CD4-positive, alpha-beta memory T cell (primary cell): ENCODE measurements at regions of chr4 and their contacts with region 1.

Region 1: DNA sequence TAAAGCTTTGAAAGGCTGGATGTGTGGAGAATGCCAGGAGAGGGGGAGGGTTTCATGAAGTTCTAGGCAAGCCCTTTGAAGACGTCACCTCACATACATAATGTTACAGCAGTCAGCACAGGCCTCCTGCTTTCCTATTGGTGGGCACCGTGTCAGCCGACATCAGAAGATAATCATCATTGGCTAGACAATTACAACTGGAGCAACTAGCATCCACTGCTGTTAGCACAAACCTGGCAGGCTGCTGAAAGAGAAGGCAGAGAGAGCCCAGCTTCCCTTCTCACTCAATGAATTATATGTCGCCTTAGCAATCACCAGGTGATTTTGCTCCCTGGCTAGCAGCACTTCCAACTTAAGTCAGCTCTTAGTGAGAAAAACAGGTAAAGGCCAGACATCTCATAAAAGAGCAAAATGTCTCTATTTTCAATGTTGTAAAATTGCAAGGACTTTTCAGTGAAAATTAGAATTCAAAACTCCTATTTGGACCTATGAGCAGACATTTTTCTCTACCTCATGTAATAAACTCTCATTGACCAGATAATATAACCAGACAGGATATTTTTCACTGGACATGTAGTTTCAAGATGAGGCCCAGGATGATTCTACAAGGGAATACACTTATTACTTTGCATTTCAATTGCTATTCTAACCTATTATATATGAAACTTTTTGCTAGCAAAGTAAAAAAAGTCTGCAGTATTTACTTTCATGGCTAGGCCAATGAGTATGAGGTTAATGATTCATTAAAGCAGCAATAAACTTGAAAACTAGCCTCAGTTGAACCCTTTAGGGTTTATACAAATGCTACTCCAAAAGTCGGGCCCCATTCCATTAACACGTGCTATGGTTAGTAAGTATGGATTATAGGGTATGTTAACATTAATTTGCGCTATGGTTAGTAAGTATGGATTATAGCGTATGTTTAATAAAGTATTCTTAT is 4.3 kb downstream of the ELOVL6 start:
- DNase-seq: peak; percentile 71 to 87 (median 78)
- H3K4me3 ChIP-seq: no peak overlapping the region
- H3K4me3 Mint-ChIP-seq: peak overlapping the region in 6 of 8 donors; percentile 12 to 40 (median 31)
- H3K27ac ChIP-seq: peak overlapping the region; percentile 21
- H3K27ac Mint-ChIP-seq: peak overlapping the region; percentile 54 to 91 (median 84)
- H3K4me1 ChIP-seq: peaks cover 27% of the 10 kb centered on the region
- H3K4me1 Mint-ChIP-seq: peaks cover 17 to 43% (median 27%) of the 10 kb centered on the region in 4 donors
- H3K27me3 ChIP-seq: no peaks in the 10 kb centered on the region
- H3K27me3 Mint-ChIP-seq: no peaks in the 10 kb centered on the region

Region 2: DNA sequence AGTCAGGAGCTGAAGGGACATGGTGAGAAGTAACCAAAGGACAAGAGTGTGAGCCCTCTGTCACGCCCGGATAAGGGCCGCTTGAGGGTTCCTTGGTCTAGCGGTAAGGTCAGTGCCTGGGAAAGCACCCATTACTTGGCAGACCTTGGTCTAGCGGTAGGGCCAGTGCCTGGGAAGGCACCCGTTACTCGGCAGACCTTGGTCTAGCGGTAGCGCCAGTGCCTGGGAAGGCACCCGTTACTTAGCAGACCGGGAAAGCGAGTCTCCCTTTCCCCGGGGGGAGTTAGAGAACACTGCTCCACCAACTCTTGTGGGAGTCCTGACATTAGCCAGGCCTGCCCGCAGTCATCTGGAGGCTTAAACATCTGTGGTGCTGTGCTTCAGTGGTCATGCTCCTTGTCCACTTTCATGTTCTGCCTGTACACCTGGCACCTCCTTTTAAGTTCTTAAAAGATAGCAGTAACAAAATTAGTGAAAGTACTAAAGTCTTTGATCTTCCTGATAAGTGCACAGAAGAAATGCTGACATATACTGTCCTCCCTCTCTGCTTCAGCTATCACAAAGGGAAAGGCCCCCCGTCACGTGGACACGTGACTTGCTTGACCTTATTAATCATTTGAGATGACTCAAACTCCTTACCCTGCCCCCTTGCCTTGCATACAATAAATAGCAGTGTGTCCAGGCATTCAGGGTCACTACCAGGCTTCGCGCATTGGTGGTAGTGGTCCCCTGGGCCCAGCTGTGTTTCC is 769.8 kb before region 1 on chr4:
- CTCF ChIA-PET with region 1: no interaction called
- POLR2A ChIA-PET with region 1: no interaction called
- intact Hi-C with region 1: loop called (anchors 1 kb)
- DNase-seq: no peak
- H3K4me3 ChIP-seq: no peak overlapping the region
- H3K4me3 Mint-ChIP-seq: no peak overlapping the region
- H3K27ac ChIP-seq: no peak overlapping the region
- H3K27ac Mint-ChIP-seq: no peak overlapping the region
- H3K4me1 ChIP-seq: peaks cover 3% of the 10 kb centered on the region
- H3K4me1 Mint-ChIP-seq: peaks cover 0 to 4% (median 3%) of the 10 kb centered on the region in 4 donors
- H3K27me3 ChIP-seq: no peaks in the 10 kb centered on the region
- H3K27me3 Mint-ChIP-seq: peaks cover 0 to 3% of the 10 kb centered on the region in 2 donors

Region 3: DNA sequence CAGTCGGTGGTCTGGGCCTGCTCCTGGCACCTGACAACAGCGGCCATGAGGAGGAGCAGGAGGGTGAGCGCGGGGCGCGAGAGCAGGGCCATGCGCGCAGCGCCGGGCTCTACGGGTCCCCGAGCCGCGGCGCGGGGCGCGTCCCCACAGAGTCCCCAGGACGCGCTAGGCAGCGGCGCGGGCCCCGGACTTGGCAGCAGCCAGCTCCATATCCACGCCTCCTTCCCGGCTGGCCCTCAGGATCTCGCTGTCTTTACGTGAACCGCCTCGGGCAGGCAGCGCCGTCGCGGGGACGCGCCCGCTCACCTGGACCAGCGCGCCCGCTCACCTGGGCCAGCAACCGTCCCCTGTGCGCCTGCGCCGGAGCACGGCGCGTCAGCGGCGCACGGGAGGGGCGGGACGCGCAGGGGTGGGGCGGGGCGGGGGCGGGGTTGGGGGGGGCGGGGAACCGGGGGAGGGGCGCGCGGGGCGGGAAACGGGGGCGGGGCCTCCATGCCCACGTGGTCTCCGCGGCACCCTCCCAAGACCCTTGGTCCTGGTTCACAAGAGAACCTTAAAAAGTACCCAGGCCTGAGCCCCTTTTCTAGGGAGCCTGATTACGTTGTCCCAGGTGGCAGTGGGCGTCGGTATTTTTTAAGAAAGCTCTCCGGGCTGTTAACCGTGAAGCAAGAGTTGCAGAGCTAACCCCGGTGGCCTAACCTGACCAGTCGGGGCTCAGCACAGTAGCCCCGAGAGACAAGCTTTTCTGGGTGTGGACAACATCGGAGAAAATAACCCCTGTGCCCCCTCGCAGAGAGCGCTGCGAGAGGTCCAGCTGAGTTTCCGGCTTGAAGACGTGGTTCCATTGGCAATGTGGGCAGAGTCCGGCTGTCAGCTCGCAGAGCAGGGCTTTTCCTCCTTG is 464.1 kb before region 1 on chr4 and contains the start of gene PLA2G12A:
- CTCF ChIA-PET with region 1: no interaction called
- POLR2A ChIA-PET with region 1: no interaction called
- intact Hi-C with region 1: loop called (anchors 10 kb)
- DNase-seq: peak; percentile 78 to 90 (median 87)
- H3K4me3 ChIP-seq: peak within 1 kb of the TSS; percentile 58 to 94
- H3K4me3 Mint-ChIP-seq: peak within 1 kb of the TSS; percentile 89 to 93 (median 91)
- H3K27ac ChIP-seq: peak within 1 kb of the TSS; percentile 72
- H3K27ac Mint-ChIP-seq: peak within 1 kb of the TSS; percentile 73 to 94 (median 90)
- H3K4me1 ChIP-seq: peaks cover 18% of the 10 kb centered on the region
- H3K4me1 Mint-ChIP-seq: peaks cover 18 to 32% (median 21%) of the 10 kb centered on the region in 4 donors
- H3K27me3 ChIP-seq: no peaks in the 10 kb centered on the region
- H3K27me3 Mint-ChIP-seq: peaks cover 0 to 1% of the 10 kb centered on the region in 2 donors
- total RNA-seq, gene PLA2G12A: 15.7 to 18.1 TPM

Region 4: GRCh38 chr4:110059556-110060191 is 134.4 kb before region 1 on chr4:
- CTCF ChIA-PET with region 1: interaction called, 3 read pairs
- POLR2A ChIA-PET with region 1: interaction called, 10 read pairs
- intact Hi-C with region 1: no loop called
- DNase-seq: peak in 4 of 5 donors; percentile 20 to 45 (median 34)
- H3K4me3 ChIP-seq: peak overlapping the region in 1 of 2 donors; percentile 38
- H3K4me3 Mint-ChIP-seq: peak overlapping the region; percentile 51 to 82 (median 80)
- H3K27ac ChIP-seq: no peak overlapping the region
- H3K27ac Mint-ChIP-seq: peak overlapping the region; percentile 38 to 91 (median 69)
- H3K4me1 ChIP-seq: peaks cover 28% of the 10 kb centered on the region
- H3K4me1 Mint-ChIP-seq: peaks cover 28 to 44% (median 36%) of the 10 kb centered on the region in 4 donors
- H3K27me3 ChIP-seq: no peaks in the 10 kb centered on the region
- H3K27me3 Mint-ChIP-seq: no peaks in the 10 kb centered on the region

Region 5: DNA sequence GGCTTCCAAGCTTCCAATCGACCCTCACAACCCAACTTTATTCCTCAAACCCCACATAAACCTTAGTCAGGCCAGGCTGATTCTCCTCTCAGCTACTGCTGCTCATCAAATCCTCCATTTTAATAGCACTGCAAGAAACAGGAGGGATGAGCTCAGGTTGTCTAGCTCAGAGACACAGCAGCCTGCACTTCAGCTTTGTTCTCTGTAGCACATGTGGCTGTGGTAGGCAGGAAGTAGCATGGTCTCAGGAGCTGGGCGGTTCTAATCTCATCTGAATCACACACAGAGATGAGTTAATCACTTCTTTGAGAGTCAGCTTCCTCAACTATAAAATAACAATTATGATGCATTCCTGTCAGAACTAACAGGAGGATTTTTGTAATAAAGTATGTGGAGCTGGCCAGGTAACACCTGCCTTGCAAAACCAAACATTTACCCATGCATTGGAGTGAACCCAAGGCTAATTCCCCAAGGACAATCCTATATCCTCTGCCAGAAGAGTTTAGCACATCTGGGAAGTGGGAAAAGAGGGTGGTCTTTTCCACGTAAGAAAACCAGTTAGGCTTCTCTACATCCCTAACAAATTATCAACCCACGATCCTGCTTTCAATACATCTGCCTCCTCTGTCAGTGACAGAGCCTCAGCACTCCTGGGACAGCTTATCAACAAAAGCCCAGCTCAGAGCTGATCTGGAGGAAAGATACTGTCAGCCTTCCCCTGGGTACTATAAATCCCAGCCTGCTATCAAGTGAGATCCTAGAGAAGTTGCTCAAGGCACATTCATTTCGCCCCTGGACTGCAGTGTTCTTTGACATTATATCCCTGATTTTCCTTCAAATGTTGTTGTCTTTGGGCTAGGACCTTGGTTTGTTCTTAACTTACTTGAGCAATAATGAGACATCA is 28.5 kb before region 1 on chr4:
- CTCF ChIA-PET with region 1: interaction called, 7 read pairs
- POLR2A ChIA-PET with region 1: interaction called, 80 read pairs
- intact Hi-C with region 1: loop called (anchors 1 kb)
- DNase-seq: peak; percentile 55 to 77 (median 65)
- H3K4me3 ChIP-seq: peak overlapping the region in 1 of 2 donors; percentile 9
- H3K4me3 Mint-ChIP-seq: peak overlapping the region; percentile 52 to 92 (median 71)
- H3K27ac ChIP-seq: peak overlapping the region; percentile 29
- H3K27ac Mint-ChIP-seq: peak overlapping the region; percentile 81 to 98 (median 93)
- H3K4me1 ChIP-seq: peaks cover 30% of the 10 kb centered on the region
- H3K4me1 Mint-ChIP-seq: peaks cover 23 to 40% (median 33%) of the 10 kb centered on the region in 4 donors
- H3K27me3 ChIP-seq: no peaks in the 10 kb centered on the region
- H3K27me3 Mint-ChIP-seq: no peaks in the 10 kb centered on the region